ENCODE measurements at regions of chr19 and their contacts with region 1.

Region 1: DNA sequence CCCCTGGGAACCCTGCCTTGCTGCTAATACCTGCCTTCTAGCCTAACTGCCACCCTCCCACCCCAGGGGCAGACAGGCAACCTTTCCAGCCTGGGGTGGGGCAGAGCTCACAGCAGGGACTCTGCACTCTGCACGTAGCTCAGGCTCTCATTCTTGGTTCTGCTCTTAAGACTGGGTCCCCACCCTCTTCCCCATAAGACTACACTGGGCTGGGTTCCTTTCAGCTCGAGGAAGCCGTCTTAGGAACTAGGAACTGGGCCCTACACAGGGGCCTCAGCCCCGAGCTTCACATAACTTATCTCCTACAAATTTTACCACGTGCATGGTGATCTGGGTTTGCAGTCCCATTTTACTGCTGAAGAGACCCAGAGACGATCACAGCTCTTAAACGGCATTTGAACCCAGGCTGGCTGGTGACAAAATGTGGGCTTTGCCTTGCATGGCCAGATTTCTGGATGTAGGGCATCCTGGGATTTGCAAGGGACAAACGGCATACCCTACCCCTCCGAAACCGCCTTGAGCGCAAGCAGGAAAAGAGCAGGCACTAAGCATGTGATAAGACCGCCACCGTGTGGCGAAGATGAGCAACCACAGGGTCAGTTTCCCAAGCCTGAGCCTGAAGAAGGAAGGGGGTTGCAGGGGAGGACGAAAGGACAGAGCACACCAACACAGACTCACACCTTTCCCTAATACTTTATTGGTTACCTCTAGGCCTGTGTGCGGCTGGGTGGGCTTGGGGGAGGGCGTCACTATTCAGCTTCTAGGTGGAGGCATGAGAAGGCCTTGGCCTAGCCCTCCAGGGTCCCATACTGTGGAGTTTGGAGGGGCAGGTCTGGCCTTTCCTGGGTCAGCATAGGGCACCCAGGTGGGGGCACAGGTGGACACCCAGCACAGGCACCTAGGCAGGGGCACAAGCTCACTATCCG is 5.1 kb downstream of the JUNB start:
- DNase-seq: no peak
- H3K4me3 ChIP-seq: no peak overlapping the region
- H3K27ac ChIP-seq: peak overlapping the region; percentile 39
- H3K27me3 ChIP-seq: no peaks in the 10 kb centered on the region
- CTCF ChIP-seq: peak; percentile 96

Region 2: GRCh38 chr19:12610540-12611360 is 185.7 kb before region 1 on chr19 and contains the starts of genes ZNF490 and ZNF791:
- CTCF ChIA-PET with region 1: interaction called, 10 read pairs
- POLR2A ChIA-PET with region 1: no interaction called
- DNase-seq: peak; percentile 93
- H3K4me3 ChIP-seq: peak within 1 kb of the TSS; percentile 100
- H3K27ac ChIP-seq: peak within 1 kb of the TSS; percentile 96
- H3K27me3 ChIP-seq: no peaks in the 10 kb centered on the region
- CTCF ChIP-seq: 0 out of 2 replicates have a peak, but pooled peaks have one; percentile 8
- polyA plus RNA-seq, gene ZNF490: 3.7 and 4.3 TPM in 2 replicates
- polyA plus RNA-seq, gene ZNF791: 13.1 and 15.8 TPM in 2 replicates

Region 3: DNA sequence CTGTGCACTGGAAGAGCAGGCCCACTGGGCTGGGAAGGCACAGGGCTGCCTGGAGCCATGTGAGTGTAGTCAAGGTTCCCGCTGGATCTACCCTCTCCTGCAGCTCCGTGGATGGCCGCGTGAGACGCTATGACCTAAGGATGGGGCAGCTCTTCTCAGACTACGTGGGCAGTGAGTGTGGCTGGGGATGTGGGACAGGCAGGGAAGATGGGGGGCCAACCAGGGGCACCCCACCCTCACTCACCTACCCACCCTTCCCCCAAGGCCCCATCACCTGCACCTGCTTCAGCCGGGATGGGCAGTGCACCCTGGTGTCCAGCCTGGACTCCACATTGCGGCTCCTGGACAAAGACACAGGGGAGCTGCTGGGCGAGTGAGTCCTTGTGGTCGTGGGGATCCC is 123.7 kb before region 1 on chr19:
- CTCF ChIA-PET with region 1: no interaction called
- POLR2A ChIA-PET with region 1: no interaction called
- DNase-seq: no peak
- H3K4me3 ChIP-seq: no peak overlapping the region
- H3K27ac ChIP-seq: no peak overlapping the region
- H3K27me3 ChIP-seq: no peaks in the 10 kb centered on the region
- CTCF ChIP-seq: no peak

Region 4: DNA sequence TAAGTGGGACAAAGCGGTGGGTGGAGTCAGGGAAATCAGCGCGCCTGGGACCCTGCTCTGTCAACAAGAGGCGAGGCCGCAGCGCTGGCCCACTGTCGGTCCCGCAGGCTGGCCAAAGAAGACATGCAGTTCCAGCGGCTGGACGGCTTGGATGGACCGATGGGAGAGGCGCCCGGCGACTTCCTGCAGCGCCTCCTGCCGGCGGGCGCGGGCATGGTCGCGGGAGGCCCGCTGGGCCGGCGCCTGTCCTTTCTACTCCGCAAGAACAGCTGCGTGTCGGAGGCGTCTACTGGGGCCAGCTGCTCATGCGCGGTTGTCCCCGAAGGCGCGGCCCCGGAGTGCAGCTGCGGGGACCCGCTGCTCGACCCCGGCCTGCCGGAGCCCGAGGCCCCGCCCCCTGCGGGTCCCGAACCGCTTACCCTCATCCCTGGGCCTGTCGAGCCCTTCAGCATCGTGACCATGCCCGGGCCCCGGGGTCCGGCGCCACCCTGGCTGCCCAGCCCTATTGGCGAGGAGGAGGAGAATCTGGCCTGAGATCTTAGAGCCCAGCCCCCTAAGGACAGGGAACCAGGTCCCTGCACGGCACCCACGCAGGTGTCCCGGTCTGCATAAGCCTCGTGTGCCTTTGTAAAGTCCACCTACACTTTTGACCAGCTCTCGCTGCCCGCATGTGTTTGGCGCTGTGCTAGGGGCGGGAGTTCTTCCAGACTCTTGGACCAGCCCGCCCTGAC is 38.7 kb before region 1 on chr19:
- CTCF ChIA-PET with region 1: interaction called, 410 read pairs
- POLR2A ChIA-PET with region 1: interaction called, 10 read pairs
- DNase-seq: no peak
- H3K4me3 ChIP-seq: peak overlapping the region; percentile 53
- H3K27ac ChIP-seq: no peak overlapping the region
- H3K27me3 ChIP-seq: peaks cover 3% of the 10 kb centered on the region
- CTCF ChIP-seq: peak; percentile 76

Region 5: GRCh38 chr19:12777217-12778016 is 19.0 kb before region 1 on chr19:
- CTCF ChIA-PET with region 1: interaction called, 92 read pairs
- POLR2A ChIA-PET with region 1: interaction called, 157 read pairs
- DNase-seq: no peak
- H3K4me3 ChIP-seq: peak overlapping the region; percentile 68
- H3K27ac ChIP-seq: peak overlapping the region; percentile 98
- H3K27me3 ChIP-seq: no peaks in the 10 kb centered on the region
- CTCF ChIP-seq: peak; percentile 88

Region 6: DNA sequence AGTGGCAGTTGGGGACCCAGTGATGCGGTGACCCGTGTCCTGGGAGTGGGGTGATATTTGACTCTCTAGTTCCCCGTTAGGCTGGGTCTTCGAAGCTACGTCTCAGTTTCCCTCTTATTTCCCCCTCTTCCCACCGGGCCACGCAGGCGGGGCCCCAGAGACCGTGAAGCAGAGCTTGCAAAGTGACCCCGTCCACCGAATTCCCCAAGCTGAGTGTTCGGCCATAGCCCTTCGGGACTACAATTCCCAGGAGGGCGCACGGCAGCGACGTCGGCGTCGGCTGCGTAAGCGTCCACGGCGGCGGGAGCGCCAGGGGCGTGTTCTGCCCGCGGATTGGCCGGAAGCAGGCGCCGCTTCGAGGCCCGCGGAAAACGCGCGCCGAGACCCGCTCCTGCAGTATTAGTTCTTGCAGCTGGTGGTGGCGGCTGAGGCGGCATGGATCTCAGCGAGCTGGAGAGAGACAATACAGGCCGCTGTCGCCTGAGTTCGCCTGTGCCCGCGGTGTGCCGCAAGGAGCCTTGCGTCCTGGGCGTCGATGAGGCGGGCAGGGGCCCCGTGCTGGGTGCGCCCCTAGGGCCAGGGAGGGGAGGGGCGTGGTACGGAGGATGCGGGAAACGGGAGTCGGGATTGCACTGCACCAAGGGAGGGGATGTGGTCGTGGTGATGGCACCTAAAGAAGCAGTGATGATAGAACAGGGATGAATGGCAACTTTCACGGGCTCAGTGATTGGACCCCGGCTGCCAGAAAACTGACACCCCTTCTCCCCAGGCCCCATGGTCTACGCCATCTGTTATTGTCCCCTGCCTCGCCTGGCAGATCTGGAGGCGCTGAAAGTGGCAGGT is 10.1 kb after region 1 on chr19 and contains the start of gene RNASEH2A:
- CTCF ChIA-PET with region 1: interaction called, 12 read pairs
- POLR2A ChIA-PET with region 1: interaction called, 11 read pairs
- DNase-seq: peak; percentile 63
- H3K4me3 ChIP-seq: peak within 1 kb of the TSS; percentile 83
- H3K27ac ChIP-seq: no peak within 1 kb of the TSS
- H3K27me3 ChIP-seq: no peaks in the 10 kb centered on the region
- CTCF ChIP-seq: no peak
- polyA plus RNA-seq, gene RNASEH2A: 11.6 and 11.7 TPM in 2 replicates

Measured in AG04450 (cell line).